AG04449 (cell line): ENCODE measurements at regions of chr2 and their contacts with region 1.

Region 1: GRCh38 chr2:219206442-219207253 is at the start of gene ZFAND2B:
- DNase-seq: no peak
- H3K4me3 ChIP-seq: peak within 1 kb of the TSS; percentile 86
- CTCF ChIP-seq: no peak

Region 2: GRCh38 chr2:219171231-219171651 is 35.4 kb before region 1 on chr2:
- CTCF ChIA-PET with region 1: interaction called, 26 read pairs
- POLR2A ChIA-PET with region 1: interaction called, 10 read pairs
- DNase-seq: peak; percentile 75
- H3K4me3 ChIP-seq: no peak overlapping the region
- CTCF ChIP-seq: peak; percentile 27

Region 3: DNA sequence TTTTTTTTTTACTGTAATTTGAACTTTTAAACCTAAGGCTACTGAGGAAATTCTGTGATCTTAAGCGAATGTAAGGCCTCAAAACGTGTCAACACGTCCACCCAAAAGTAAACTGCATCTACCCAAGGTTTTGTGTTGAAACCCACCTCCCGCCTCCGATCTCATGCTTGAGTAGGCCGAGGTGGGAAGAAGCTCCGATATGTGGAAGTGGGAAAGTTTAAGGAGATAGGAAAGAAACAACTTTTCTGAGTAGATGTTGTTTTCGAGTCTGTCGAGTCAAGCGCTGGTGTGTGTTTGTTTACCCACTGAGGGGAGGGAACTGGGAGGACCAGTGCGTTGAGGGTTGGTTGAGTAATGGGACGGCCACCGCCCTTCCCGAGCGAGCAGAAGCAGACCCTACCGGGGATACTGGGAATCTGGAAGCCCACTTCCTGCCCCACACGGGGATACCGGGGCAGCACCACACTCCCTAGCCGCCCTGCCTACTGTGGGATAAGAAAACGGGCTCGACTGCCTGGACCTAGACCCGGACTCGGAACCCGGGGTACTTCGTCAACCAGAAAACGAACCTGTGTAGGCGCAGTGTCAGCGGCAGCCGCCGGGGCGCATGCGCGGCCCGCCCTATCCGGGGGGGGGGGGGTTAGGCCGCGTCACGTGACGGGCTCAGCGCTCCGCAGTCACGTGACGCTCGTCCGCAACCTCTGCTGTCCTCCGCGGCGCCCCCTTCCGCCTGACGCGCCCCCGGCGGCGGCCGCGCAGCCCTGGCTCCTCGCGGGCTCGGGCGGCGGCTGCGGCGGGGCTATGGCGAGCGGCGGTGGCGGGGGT is 28.9 kb before region 1 on chr2 and contains the start of gene RETREG2:
- CTCF ChIA-PET with region 1: interaction called, 26 read pairs
- POLR2A ChIA-PET with region 1: interaction called, 10 read pairs
- DNase-seq: no peak
- H3K4me3 ChIP-seq: peak within 1 kb of the TSS; percentile 84
- CTCF ChIP-seq: peak; percentile 65

Region 4: DNA sequence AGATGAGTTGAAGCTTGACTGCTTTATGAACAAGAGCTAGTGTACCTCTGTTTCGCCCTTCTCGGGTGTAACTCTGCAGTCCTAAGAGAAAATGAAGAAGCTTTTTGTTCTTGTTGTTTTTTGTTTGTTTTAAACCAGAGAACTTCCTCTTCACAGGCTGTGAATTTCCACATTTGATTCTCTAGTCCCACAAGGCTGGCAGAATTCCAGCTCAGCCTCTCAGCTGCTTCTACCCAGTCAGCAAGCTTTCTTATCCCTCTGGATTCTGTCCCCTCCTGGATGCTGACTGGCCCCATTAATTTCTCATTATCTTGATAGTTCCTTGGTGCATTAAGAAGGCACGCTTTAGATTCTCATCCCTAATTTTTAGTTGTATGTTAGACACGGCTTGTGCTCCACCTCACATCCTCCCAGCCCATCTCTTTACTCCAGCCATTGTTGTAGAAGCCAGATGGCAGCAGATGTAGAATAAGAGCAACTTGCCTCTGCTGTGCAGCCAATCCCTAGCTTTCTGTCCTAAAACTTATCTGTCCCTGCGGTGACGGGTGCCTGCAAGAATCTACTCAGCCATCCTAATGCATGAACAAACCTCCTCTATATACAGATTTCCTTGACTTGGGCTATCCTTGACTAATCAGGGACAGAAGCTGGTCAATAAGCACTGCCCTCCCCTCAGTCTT is 138.2 kb after region 1 on chr2:
- CTCF ChIA-PET with region 1: no interaction called
- POLR2A ChIA-PET with region 1: no interaction called
- DNase-seq: no peak
- H3K4me3 ChIP-seq: no peak overlapping the region
- CTCF ChIP-seq: no peak